ENCODE measurements at regions of chr14 and their contacts with region 1.

Region 1: GRCh38 chr14:65832431-65833266 is 420.1 kb downstream of the FUT8 start:
- DNase-seq: no peak
- H3K4me3 ChIP-seq: no peak overlapping the region
- H3K4me1 ChIP-seq: no peaks in the 10 kb centered on the region
- H3K27me3 ChIP-seq: no peaks in the 10 kb centered on the region

Region 2: GRCh38 chr14:65169351-65169750 is 663.3 kb before region 1 on chr14:
- in situ Hi-C with region 1: loop called (anchors 5 kb)
- DNase-seq: no peak
- H3K4me3 ChIP-seq: no peak overlapping the region
- H3K4me1 ChIP-seq: peaks cover 9% of the 10 kb centered on the region; the same call in 1 of the 2 replicates
- H3K27me3 ChIP-seq: no peaks in the 10 kb centered on the region